ENCODE measurements at regions of chr4 and their contacts with region 1.

Region 1: GRCh38 chr4:77022560-77023179 is 53.1 kb downstream of the CCNI start:
- DNase-seq: no peak
- H3K4me3 Mint-ChIP-seq: no peak overlapping the region
- H3K27ac Mint-ChIP-seq: no peak overlapping the region
- H3K4me1 Mint-ChIP-seq: peaks cover 21% of the 10 kb centered on the region
- H3K27me3 Mint-ChIP-seq: peaks cover 5% of the 10 kb centered on the region

Region 2: GRCh38 chr4:76305971-76306881 is 716.4 kb before region 1 on chr4 and contains the start of gene STBD1:
- intact Hi-C with region 1: loop called (anchors 1 kb)
- DNase-seq: peak; percentile 24
- H3K4me3 Mint-ChIP-seq: peak within 1 kb of the TSS; percentile 68
- H3K27ac Mint-ChIP-seq: peak within 1 kb of the TSS; percentile 24
- H3K4me1 Mint-ChIP-seq: peaks cover 48% of the 10 kb centered on the region
- H3K27me3 Mint-ChIP-seq: peaks cover 16% of the 10 kb centered on the region
- total RNA-seq, gene STBD1: 0.51 and 0.57 TPM in 2 replicates

Region 3: DNA sequence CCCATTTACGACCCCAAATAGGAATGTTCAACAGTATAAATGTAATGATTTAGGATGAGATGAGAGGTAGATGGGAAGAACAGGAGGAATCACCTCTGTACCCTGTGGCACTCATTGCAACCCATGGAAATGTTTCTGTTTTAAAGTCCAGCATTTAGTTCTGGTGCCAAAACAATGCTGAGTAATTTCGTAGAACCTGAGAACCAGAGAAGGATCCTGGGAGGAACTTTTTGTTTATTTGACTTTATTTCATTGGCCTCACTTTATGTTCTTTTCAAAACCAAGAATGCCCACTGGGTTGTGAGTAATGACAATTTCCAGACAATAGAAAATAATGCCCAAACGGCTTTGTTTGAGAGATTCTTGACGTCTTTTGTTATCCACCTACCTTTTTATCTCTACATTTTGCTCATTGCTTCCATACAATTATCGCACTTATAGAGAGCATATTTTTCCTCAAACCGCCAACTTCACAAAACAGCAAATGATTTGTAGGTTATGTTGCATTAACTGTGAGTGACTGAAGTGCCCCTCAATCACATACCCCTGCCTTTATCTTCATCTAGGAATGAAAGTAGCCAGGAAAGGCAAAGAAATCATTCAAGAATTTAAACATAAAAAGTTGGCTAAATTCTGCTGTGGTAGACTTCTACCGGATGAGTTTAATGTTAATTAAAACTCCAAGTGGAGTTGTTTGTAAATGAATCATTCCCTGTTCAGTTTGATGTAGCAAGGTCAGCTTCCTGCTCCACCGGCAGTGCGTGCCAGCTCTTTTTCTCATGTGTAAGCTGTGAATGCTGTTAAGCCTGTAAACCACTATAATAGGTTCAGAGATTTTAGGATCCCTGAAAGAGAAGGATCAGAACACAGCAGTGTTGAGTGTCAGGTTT is 476.1 kb before region 1 on chr4:
- intact Hi-C with region 1: loop called (anchors 5 kb)
- DNase-seq: no peak
- H3K4me3 Mint-ChIP-seq: no peak overlapping the region
- H3K27ac Mint-ChIP-seq: no peak overlapping the region
- H3K4me1 Mint-ChIP-seq: peaks cover 22% of the 10 kb centered on the region
- H3K27me3 Mint-ChIP-seq: peaks cover 4% of the 10 kb centered on the region

Region 4: GRCh38 chr4:76666940-76667532 is 355.6 kb before region 1 on chr4:
- intact Hi-C with region 1: no loop called
- DNase-seq: no peak
- H3K4me3 Mint-ChIP-seq: no peak overlapping the region
- H3K27ac Mint-ChIP-seq: peak overlapping the region; percentile 35
- H3K4me1 Mint-ChIP-seq: peaks cover 7% of the 10 kb centered on the region
- H3K27me3 Mint-ChIP-seq: peaks cover 4% of the 10 kb centered on the region

Region 5: DNA sequence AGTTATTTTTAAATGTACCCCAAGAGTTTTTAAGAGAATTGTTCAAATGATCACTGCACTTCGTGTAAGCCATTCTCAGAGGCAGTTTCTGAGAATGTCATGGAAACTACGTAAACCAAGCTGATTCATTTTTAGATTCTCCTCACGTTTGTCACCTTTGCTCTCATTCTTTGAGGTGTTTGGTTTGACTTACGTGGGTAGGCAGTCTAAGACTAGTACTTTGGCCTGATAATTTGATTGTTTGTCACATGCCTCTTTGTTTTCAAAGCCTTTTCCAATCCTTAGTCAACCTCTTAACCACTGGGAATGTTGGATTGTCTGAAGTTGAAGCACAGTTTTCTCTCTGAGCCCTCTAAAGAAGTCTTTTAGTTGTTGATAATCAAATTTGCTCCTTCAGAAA is 62.7 kb before region 1 on chr4:
- intact Hi-C with region 1: loop called (anchors 1 kb)
- DNase-seq: no peak
- H3K4me3 Mint-ChIP-seq: no peak overlapping the region
- H3K27ac Mint-ChIP-seq: no peak overlapping the region
- H3K4me1 Mint-ChIP-seq: peaks cover 18% of the 10 kb centered on the region
- H3K27me3 Mint-ChIP-seq: peaks cover 50% of the 10 kb centered on the region

Region 6: GRCh38 chr4:77007358-77008191 is 15.1 kb before region 1 on chr4:
- intact Hi-C with region 1: loop called (anchors 2 kb)
- DNase-seq: no peak
- H3K4me3 Mint-ChIP-seq: peak overlapping the region; percentile 27
- H3K27ac Mint-ChIP-seq: peak overlapping the region; percentile 8
- H3K4me1 Mint-ChIP-seq: peaks cover 44% of the 10 kb centered on the region
- H3K27me3 Mint-ChIP-seq: peaks cover 16% of the 10 kb centered on the region

Region 7: GRCh38 chr4:77525538-77525937 is 502.9 kb after region 1 on chr4:
- intact Hi-C with region 1: no loop called
- DNase-seq: no peak
- H3K4me3 Mint-ChIP-seq: no peak overlapping the region
- H3K27ac Mint-ChIP-seq: no peak overlapping the region
- H3K4me1 Mint-ChIP-seq: peaks cover 5% of the 10 kb centered on the region
- H3K27me3 Mint-ChIP-seq: peaks cover 6% of the 10 kb centered on the region

Measured in activated T-helper 1 cell treated with anti-CD3 and anti-CD28 coated beads, Interleukin-12 subunit alpha, Interleukin-12 subunit beta, Interleukin-2, Interleukin-4 antibody, amounts not matched to agents 30 ng/mL and 10 ng/mL and 1 ng/mL, durations not matched to agents 14 hours and 24 hours and 36 hours (primary cell).